ENCODE measurements at regions of chr9 and their contacts with region 1.

Region 1: DNA sequence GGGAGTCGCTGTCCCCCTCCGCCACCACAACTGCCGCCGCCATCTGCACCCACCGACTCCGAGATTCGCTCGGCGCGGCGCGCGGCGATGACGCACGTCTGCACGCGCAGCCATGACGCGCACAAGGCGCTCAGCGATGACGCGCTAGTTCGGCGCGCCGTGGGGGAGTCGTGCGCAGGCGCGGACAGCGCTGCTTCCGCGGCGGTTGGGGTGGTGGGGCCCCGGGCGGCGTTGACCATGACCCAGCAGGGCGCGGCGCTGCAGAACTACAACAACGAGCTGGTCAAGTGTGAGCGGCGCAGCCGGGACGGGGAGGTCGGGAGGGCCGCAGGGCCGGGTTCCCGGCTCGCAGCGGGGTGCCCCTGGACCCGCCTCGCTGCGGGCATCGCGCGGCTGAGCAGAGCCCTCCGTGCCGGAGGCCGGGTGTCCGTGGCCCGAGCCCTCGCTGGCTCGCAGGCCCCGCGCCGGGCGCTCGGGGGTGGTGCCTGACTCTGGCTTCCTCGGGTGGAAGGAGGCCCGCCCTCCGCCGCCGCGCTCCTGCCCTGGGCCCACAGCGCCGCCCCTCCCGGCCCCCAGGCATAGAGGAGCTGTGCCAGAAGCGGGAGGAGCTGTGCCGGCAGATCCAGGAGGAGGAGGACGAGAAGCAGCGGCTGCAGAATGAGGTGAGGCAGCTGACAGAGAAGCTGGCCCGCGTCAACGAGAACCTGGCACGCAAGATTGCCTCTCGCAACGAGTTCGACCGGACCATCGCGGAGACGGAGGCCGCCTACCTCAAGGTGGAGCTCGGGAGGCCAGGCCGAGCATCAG is at the starts of genes ANAPC2 and SSNA1:
- DNase-seq: peak; percentile 69 to 96
- ATAC-seq: peak; percentile 66 to 82
- H3K4me3 ChIP-seq: peak within 1 kb of the TSS; percentile 92
- H3K27ac ChIP-seq: peak within 1 kb of the TSS; percentile 97
- H3K4me1 ChIP-seq: peaks cover 23% of the 10 kb centered on the region
- CTCF ChIP-seq: peak; percentile 39
- EP300 ChIP-seq: no peak
- POLR2A ChIP-seq: peak; percentile 65
- RAD21 ChIP-seq: peak; percentile 31 to 49; a peak in 3 of 5 replicates
- polyA plus RNA-seq, gene ANAPC2: 17.5 and 22.3 TPM in 2 replicates
- polyA plus RNA-seq, gene SSNA1: 52.6 and 54.1 TPM in 2 replicates

Region 2: DNA sequence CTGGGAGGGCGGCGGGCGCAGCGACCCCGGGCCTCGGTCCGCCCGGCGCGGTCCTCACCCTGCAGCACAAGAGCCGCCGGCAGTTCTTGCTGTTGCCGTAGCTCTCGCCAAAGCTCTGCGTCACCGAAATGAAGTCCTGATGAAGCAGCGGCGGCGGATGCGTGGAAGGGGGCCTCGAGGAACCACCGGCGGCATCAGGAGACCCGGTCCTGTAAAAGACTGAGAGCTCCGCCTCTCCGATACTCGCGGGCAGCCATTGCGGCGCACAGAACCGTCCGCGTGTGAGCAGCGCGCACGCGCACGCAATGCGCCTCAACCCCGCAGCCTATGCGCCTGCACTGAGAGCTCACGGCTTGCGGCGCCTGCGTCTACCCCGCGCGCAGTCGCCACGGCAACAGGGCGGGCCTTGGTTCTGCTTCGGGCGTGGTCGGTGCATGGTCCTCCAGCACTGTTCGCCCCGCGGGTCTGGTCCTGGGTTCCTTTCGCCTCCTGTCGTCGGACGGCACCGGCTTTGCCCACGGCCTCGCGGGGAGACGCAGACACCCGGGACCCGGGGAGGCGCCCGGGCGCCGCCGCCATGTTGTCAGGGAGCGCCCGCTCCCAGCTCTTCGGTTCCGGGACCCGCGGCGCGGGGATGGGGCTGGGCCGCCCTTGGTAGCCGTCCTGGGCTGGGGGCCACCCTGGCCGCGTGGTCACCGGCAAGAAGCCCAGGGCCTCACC is 59.1 kb before region 1 on chr9:
- CTCF ChIA-PET with region 1: interaction called, 10 read pairs
- POLR2A ChIA-PET with region 1: interaction called, 15 read pairs
- DNase-seq: peak; percentile 93 to 95
- ATAC-seq: peak; percentile 95 to 96
- H3K4me3 ChIP-seq: peak overlapping the region; percentile 94
- H3K27ac ChIP-seq: peak overlapping the region; percentile 98
- H3K4me1 ChIP-seq: peaks cover 17% of the 10 kb centered on the region
- CTCF ChIP-seq: no peak
- EP300 ChIP-seq: no peak
- POLR2A ChIP-seq: peak; percentile 85
- RAD21 ChIP-seq: no peak

Region 3: GRCh38 chr9:137150617-137151457 is 37.9 kb before region 1 on chr9:
- CTCF ChIA-PET with region 1: interaction called, 3 read pairs
- POLR2A ChIA-PET with region 1: interaction called, 20 read pairs
- DNase-seq: peak; percentile 74 to 87
- ATAC-seq: peak in 1 of 2 experiments; percentile 47; a peak in 3 of 6 replicates
- H3K4me3 ChIP-seq: no peak overlapping the region
- H3K27ac ChIP-seq: peak overlapping the region in 1 of 2 experiments; percentile 55; a peak in 3 of 6 replicates
- H3K4me1 ChIP-seq: peaks cover 21% of the 10 kb centered on the region; the same call in 1 of the 3 replicates
- CTCF ChIP-seq: no peak
- EP300 ChIP-seq: no peak
- POLR2A ChIP-seq: no peak
- RAD21 ChIP-seq: no peak

Region 4: DNA sequence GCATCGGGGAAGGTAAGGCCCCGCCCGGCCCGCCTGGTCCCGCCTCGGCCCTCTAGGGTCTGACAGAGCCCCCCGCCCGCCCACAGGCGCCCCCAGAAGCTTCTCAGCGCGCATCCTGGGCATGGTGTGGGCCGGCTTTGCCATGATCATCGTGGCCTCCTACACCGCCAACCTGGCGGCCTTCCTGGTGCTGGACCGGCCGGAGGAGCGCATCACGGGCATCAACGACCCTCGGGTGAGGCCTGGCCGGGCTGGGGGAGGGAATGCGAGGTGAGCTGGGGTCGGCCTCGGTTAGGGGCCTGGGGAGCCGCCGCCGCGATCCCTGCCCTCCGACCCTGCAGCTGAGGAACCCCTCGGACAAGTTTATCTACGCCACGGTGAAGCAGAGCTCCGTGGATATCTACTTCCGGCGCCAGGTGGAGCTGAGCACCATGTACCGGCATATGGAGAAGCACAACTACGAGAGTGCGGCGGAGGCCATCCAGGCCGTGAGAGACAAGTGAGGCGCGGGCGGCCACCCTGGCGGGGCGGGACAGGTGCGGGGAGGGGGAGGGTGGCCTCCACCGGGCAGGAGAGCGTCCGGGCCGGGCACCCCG is 26.1 kb before region 1 on chr9:
- CTCF ChIA-PET with region 1: interaction called, 156 read pairs
- POLR2A ChIA-PET with region 1: interaction called, 4 read pairs
- DNase-seq: peak in 1 of 2 experiments; percentile 64
- ATAC-seq: peak; percentile 25 to 48; a peak in 4 of 6 replicates
- H3K4me3 ChIP-seq: peak overlapping the region; percentile 38
- H3K27ac ChIP-seq: peak overlapping the region; percentile 54 to 85
- H3K4me1 ChIP-seq: peaks cover 27% of the 10 kb centered on the region
- CTCF ChIP-seq: peak; percentile 14; the same call in 1 of the 3 replicates
- EP300 ChIP-seq: no peak
- POLR2A ChIP-seq: no peak
- RAD21 ChIP-seq: no peak

Region 5: DNA sequence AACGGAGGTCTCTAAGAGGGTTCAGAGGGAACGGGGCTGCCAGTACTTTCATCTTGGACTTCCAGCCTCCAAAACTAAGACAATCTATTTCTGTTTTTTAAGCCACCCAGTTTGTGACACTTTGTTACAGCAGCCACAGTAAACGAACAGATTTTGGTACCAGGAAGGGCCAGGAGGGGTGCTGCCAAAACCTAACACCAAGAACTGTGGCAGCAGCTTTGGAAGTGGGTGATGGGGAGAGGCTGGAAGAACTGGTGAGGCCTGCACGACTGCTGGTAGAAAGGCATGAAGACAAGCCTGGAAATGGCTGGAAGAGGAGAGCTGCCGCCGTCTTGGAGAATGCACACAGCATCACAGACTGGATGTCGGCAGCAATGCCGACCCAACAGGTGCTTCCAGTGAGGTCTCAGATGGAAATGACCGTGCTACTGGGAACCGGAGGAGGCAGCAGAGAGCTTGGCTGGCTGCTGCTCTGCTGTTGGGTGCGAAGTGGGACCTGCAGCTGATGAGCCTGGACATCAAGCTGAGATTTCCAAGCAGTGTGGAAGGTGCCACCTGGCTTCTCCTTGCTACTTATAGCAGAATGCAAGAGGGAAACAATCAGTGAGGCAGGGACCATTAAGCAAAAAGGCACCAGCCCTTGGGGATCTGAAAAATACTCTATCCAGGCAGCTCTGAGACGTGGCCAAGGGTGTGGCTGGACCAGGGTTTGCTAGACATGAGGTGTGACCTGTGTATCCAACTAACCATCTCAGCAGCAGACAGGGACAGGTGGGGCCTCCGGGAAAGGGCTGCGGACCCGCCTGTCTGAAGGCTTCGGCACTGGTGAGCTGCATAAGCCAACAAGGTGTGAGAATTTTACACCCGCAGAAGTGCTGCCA is 12.2 kb before region 1 on chr9:
- CTCF ChIA-PET with region 1: interaction called, 156 read pairs
- POLR2A ChIA-PET with region 1: interaction called, 15 read pairs
- DNase-seq: peak; percentile 73 to 91
- ATAC-seq: peak; percentile 78 to 85
- H3K4me3 ChIP-seq: no peak overlapping the region
- H3K27ac ChIP-seq: no peak overlapping the region
- H3K4me1 ChIP-seq: no peaks in the 10 kb centered on the region
- CTCF ChIP-seq: peak; percentile 54
- EP300 ChIP-seq: no peak
- POLR2A ChIP-seq: no peak
- RAD21 ChIP-seq: peak; percentile 24 to 48; a peak in 2 of 5 replicates

Region 6: DNA sequence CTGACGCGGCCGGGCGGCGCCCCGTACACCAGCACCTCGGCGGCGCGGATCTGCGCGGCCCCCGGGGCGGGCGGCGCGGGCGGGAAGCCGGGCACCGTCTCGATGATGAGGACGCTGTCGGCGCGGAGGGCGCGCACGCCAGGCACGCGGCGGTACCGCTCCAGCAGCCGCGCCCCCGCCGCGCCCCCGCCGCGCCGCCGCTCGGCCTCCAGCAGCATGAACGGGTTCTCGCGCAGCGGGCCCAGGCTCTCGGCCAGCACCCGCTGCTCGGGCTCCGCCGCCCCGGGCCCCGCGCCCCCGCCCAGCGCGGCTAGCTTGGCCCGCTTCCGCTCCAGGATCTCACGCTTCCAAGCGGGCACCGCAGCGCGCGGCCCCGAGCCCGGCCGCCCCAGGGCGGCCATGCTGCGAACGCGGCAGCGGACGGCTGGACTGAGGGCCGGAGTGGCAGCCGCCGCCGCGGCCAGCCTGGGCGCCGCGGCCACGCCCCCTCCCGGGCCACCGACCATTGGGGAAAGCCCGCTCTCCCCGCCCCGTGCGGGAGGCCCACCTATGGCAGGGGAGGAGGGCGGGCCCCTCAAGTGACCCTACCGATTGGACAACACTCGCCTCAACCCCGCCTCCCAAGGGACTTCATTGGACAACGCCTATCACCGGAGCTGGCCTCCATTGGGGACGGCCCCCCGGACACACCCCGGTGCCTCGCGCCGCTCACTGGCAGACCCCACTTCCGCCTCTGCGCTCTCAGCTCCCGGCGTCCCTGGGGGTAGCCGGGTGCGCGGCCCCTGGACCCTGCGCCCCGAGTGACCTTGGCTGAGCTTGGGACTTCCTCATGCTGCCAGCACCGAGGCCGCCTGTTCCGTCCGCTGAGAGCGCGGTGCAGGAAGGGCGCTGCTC is 11.9 kb after region 1 on chr9 and contains the start of gene TPRN:
- CTCF ChIA-PET with region 1: interaction called, 20 read pairs
- POLR2A ChIA-PET with region 1: interaction called, 38 read pairs
- DNase-seq: peak; percentile 98 to 100
- ATAC-seq: peak; percentile 87 to 96
- H3K4me3 ChIP-seq: peak within 1 kb of the TSS; percentile 60
- H3K27ac ChIP-seq: peak within 1 kb of the TSS; percentile 80 to 87
- H3K4me1 ChIP-seq: peaks cover 38% of the 10 kb centered on the region
- CTCF ChIP-seq: no peak
- EP300 ChIP-seq: no peak
- POLR2A ChIP-seq: peak; percentile 82
- RAD21 ChIP-seq: no peak
- polyA plus RNA-seq, gene TPRN: 2.1 and 2.4 TPM in 2 replicates

Region 7: DNA sequence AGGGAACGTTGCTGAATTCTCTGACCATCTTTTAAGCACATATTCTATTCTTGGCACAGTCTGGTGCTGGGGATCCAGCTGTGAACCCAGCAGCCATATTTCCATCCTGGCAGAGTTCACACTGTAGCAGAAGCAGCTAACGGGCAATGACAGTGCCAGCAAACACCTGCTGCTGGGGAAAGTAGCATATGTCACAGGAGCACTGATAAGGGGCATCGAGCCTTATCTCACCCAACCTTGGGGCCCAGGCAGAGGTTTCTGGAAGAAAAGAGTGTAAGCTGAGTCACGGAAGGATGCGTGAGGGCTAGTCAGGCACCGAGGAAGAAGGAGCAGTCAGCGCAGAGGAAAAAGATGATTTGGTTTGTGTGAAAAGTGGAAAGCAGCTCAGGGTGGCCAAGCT is 17.9 kb after region 1 on chr9:
- CTCF ChIA-PET with region 1: interaction called, 14 read pairs
- POLR2A ChIA-PET with region 1: interaction called, 38 read pairs
- DNase-seq: no peak
- ATAC-seq: no peak
- H3K4me3 ChIP-seq: peak overlapping the region; percentile 93
- H3K27ac ChIP-seq: peak overlapping the region in 1 of 2 experiments; percentile 97; a peak in 3 of 6 replicates
- H3K4me1 ChIP-seq: peaks cover 24% of the 10 kb centered on the region
- CTCF ChIP-seq: no peak
- EP300 ChIP-seq: no peak
- POLR2A ChIP-seq: no peak
- RAD21 ChIP-seq: no peak

Region 8: GRCh38 chr9:137302176-137302994 is 113.7 kb after region 1 on chr9 and contains the start of gene NRARP:
- CTCF ChIA-PET with region 1: no interaction called
- POLR2A ChIA-PET with region 1: no interaction called
- DNase-seq: peak; percentile 77 to 89
- ATAC-seq: peak; percentile 54 to 61
- H3K4me3 ChIP-seq: peak within 1 kb of the TSS; percentile 49
- H3K27ac ChIP-seq: peak within 1 kb of the TSS; percentile 58 to 90
- H3K4me1 ChIP-seq: peaks cover 19% of the 10 kb centered on the region
- CTCF ChIP-seq: peak; percentile 90
- EP300 ChIP-seq: no peak
- POLR2A ChIP-seq: peak; percentile 97
- RAD21 ChIP-seq: peak; percentile 16 to 40; a peak in 3 of 5 replicates
- polyA plus RNA-seq, gene NRARP: 3.2 and 5.1 TPM in 2 replicates